Activated CD4-positive, alpha-beta T cell treated with anti-CD3 and anti-CD28 coated beads, Interleukin-2, amount 10 ng/mL, durations not matched to agents 24 days and 14 days (primary cell): ENCODE measurements at regions of chr19 and their contacts with region 1.

Region 1: GRCh38 chr19:10194500-10195289 is at the start of gene DNMT1:
- DNase-seq: peak; percentile 99
- H3K4me3 Mint-ChIP-seq: peak within 1 kb of the TSS; percentile 93
- H3K27ac Mint-ChIP-seq: peak within 1 kb of the TSS; percentile 97
- H3K4me1 Mint-ChIP-seq: peaks cover 35% of the 10 kb centered on the region
- H3K27me3 Mint-ChIP-seq: no peaks in the 10 kb centered on the region
- total RNA-seq, gene DNMT1: 410 and 414 TPM in 2 replicates

Region 2: GRCh38 chr19:10209315-10209714 is 14.6 kb after region 1 on chr19:
- intact Hi-C with region 1: no loop called
- DNase-seq: no peak
- H3K4me3 Mint-ChIP-seq: no peak overlapping the region
- H3K27ac Mint-ChIP-seq: no peak overlapping the region
- H3K4me1 Mint-ChIP-seq: no peaks in the 10 kb centered on the region
- H3K27me3 Mint-ChIP-seq: peaks cover 2% of the 10 kb centered on the region

Region 3: DNA sequence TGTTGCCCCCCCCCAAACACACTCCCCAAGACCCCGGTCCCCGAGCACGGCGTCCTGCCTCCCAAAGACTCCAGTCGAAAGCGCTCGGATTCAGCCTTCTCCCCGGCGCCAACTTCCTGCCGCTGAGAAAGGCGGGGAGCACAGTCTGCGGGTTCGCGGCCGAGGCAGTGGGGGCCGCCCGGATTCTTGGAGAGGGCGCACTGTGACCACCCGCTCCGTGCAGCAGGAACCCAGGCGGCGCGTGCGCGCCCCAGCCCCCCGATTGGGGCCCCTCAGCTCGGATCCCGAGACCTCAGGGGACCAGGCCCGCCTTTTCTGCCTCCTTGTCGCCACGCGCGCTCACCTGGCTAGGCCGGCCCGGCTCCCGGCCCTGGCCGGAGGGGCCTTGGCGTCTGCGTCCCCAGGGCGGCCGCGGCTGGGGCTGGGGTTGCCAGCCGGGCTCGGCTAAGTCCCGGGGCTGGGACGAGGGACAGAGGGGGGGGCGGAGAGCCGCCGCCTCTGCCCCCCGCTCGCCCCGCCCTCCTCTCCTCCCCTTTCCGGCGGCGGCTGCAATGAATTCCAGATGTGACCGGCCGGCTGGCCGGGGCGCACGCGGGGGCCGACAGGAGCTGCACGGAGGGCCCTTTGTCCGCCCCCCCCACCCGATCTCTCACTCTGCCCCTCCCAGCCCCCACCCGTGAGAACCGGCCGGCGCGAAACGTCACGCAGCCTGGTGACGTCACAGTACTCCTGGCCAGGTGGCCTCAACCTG is 36.3 kb after region 1 on chr19 and contains the start of gene S1PR2:
- intact Hi-C with region 1: loop called (anchors 2 kb)
- DNase-seq: peak; percentile 89
- H3K4me3 Mint-ChIP-seq: peak within 1 kb of the TSS; percentile 89
- H3K27ac Mint-ChIP-seq: peak within 1 kb of the TSS; percentile 88
- H3K4me1 Mint-ChIP-seq: peaks cover 16% of the 10 kb centered on the region
- H3K27me3 Mint-ChIP-seq: no peaks in the 10 kb centered on the region
- total RNA-seq, gene S1PR2: 14.3 and 14.7 TPM in 2 replicates

Region 4: GRCh38 chr19:10332955-10333757 is 138.5 kb after region 1 on chr19 and contains the start of gene RAVER1:
- intact Hi-C with region 1: loop called (anchors 10 kb)
- DNase-seq: peak; percentile 99
- H3K4me3 Mint-ChIP-seq: peak within 1 kb of the TSS; percentile 96
- H3K27ac Mint-ChIP-seq: peak within 1 kb of the TSS; percentile 96
- H3K4me1 Mint-ChIP-seq: peaks cover 21% of the 10 kb centered on the region
- H3K27me3 Mint-ChIP-seq: no peaks in the 10 kb centered on the region
- total RNA-seq, gene RAVER1: 96.1 and 108 TPM in 2 replicates